Left cardiac atrium (tissue), 4 donors: ENCODE measurements at regions of chr11 and their contacts with region 1.

Region 1: DNA sequence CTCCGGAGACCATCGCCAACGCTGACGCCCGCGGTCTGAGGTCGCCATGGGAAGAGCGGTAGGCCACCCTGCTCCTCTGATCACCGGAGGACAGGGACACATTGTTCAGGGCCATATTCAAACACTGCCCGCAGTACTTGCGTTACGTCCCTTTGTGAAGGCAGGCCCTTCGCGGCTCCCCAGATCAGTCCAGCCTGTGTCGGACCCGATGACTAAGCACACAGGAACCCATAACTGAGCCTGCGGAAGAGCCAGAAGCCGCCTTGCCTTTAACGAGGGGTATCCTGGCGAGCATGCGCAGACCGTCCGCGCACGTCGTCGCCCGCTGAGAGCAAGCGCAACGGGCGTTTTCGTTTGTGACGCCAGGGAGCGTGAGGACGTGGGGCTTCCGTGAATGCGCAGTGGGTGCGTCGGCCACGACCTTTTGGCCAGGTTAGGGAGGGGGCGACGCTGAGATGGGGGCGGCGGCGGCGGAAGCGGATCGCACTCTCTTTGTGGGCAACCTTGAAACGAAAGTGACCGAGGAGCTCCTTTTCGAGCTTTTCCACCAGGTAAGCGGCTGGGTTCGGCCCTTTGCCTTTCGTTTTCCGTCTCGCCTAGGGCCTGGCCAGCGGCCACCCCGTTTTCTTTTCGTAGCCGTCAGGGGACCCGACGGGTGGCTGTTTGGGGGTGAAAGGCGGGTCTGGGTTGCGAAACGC is at the starts of genes C11orf71 and RBM7:
- DNase-seq: peak; percentile 100
- ATAC-seq: peak; percentile 97 to 99
- total RNA-seq, gene C11orf71: 5.6 to 9.9 TPM
- total RNA-seq, gene RBM7: 19.1 to 24.4 TPM

Region 2: GRCh38 chr11:114280696-114281095 is 119.7 kb before region 1 on chr11:
- intact Hi-C with region 1: loop called in 1 of 2 experiments (anchors 10 kb)
- DNase-seq: peak; percentile 75
- ATAC-seq: peak; percentile 93 to 94

Region 3: DNA sequence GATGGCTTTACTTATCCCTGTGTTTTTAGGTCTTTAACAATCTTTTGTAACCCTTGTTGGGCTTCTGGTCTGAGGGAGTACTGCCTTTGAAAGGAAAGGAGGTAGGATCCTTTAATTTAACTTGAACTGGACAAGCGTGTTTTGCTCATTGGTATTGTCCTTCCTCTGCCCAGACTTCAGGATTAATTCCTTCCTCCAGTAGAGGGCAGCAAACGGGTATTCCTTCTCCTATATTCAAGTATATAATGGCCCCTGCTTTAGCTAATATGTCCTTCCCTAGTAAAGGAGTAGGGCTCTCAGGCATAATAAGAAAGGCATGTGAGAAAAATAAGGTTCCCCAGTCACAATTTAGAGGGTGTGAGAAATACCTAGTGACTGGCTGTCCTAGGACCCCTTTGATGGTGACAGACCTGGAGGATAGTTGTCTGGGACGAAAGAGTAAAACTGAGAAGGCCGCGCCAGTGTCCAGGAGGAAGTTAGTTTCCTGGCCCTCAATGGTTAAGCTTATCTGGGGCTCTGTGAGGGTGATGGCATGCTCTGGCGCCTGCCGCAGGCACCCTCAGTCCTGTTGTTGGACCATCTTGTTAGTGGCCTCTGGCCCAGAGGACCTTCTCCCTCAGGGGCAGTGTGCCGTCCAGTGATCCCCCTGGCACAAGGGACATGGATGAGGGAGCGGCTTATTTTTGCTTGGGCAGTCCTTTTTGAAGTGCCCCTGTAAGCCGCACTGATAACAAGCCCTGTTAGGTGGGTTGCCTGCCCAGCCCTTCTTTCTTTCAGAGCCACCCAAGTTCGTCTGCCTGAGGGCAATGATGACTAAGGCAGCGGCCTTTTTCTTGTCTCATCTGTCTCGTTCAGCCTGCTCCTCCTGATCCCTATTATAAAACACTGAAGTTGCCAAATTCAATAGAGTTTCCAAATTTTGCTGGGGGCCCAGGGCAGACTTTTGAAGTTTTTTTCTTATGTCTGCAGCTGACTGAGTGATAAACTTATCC is 51.9 kb before region 1 on chr11:
- intact Hi-C with region 1: loop called in 1 of 2 experiments (anchors 5 kb)
- DNase-seq: no peak
- ATAC-seq: peak; percentile 74 to 80

Region 4: DNA sequence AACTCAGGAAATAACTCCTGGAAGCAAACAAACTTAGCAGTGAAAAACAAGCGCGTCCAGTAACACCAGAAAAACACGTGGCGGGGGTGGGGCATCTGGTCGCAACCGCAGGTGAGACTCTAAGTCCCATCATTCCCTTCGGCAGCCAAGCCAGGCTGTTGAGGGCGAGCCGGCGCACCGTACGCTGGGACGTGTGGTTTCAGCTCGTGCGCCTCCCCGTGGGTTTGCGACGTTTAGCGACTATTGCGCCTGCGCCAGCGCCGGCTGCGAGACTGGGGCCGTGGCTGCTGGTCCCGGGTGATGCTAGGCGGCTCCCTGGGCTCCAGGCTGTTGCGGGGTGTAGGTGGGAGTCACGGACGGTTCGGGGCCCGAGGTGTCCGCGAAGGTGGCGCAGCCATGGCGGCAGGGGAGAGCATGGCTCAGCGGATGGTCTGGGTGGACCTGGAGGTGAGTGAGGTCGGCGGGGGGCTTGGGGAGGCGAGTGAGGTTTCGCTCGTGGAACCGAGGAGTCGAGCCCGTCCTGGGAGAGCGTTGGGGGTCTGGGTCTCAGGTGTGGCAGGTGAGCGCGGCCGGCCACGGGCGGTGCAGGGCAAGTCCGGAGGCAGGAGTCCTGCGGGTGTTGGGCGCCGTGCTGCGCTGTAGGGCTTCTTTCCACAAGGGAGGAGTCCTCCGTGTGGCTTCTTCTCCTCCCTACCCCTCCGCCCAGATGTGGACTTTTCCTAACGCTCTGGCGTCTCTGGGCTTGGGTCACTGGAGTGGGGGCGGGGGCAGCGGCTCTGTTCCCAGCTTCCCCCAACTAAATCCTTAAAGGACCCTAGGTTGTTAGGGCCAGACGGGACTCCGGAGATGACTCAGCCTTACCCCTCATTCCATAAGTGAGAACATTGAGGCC is 39.1 kb after region 1 on chr11 and contains the start of gene REXO2:
- intact Hi-C with region 1: loop called in 1 of 2 experiments (anchors 2 kb)
- DNase-seq: peak; percentile 98
- ATAC-seq: peak; percentile 99
- total RNA-seq, gene REXO2: 92.7 to 112 TPM